Ovary (tissue), 10 donors: ENCODE measurements at regions of chr16 and their contacts with region 1.

Region 1: DNA sequence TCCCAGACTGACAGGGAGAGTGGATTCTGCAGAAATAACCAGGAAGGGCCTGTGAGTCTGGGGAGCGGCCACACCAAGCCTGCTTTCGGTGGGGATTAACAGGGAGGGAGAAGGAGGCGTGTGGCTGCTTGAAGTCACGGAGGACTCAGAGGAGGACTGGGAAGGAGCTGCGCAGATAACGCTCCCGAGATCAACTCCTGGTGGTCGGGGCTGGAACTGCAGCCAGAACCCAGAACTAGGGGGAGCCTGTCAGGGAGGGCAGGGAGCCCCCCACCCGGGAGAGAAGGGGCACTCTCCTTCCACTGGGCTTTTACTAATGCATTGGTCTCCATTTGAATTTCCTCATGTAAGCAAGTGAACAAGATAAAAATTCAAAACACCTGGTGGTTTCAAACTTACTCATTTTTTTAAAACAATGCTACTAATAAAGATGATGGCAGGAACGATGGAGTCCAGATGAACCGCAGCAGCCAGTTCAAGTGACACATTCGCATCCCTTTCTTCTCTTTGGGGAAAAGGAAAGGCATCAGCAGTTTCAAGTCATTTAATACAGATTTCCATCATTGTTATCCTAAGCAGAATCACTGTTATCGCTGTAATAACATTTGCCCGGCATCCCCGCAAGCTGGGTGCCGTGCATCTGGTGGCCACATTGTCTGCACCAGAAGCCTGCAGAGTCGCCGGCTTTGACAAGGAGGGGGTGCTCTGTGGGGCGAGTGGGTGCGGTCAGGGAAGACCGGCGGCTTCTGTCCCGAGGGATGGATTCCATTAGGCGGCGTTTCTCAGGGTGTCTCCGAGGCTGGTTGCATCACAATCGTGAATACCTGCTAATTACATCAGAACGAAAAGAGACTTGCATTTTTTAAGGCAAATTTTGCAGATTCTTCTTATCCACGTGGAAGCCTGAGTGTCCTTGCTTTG is 183.0 kb downstream of the FOXL1 start:
- DNase-seq: no peak
- H3K4me3 ChIP-seq: no peak overlapping the region
- H3K27ac ChIP-seq: no peak overlapping the region
- H3K4me1 ChIP-seq: no peaks in the 10 kb centered on the region
- H3K27me3 ChIP-seq: no peaks in the 10 kb centered on the region
- CTCF ChIP-seq: no peak
- EP300 ChIP-seq: no peak
- POLR2A ChIP-seq: no peak

Region 2: GRCh38 chr16:86570558-86571529 is 190.5 kb before region 1 on chr16:
- intact Hi-C with region 1: loop called in 1 of 4 experiments (anchors 5 kb)
- DNase-seq: no peak
- H3K4me3 ChIP-seq: no peak overlapping the region
- H3K27ac ChIP-seq: no peak overlapping the region
- H3K4me1 ChIP-seq: peaks cover 4% of the 10 kb centered on the region
- H3K27me3 ChIP-seq: peaks cover 2% of the 10 kb centered on the region
- CTCF ChIP-seq: no peak
- EP300 ChIP-seq: no peak
- POLR2A ChIP-seq: no peak

Region 3: DNA sequence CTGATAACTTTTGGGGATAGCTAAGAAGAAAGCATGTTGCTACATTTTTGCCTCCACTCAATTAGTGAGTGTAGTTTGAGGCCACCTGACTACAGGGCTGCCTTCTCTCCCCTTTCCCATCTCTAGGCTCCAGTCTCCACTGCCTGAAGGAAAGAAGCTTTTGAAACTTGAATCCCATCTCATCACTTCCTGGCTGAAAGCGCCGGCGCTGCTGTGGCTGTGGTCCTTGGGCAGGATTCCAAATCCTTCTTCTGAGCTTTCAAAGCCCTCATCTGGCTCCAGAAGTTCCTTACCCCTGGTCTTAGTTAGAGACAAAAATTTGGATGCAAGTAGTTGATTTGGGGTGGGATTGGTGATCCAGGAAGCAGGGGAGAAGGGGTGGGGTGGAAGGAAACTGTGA is 63.7 kb before region 1 on chr16:
- intact Hi-C with region 1: no loop called
- DNase-seq: no peak
- H3K4me3 ChIP-seq: no peak overlapping the region
- H3K27ac ChIP-seq: no peak overlapping the region
- H3K4me1 ChIP-seq: no peaks in the 10 kb centered on the region
- H3K27me3 ChIP-seq: no peaks in the 10 kb centered on the region
- CTCF ChIP-seq: no peak
- EP300 ChIP-seq: no peak
- POLR2A ChIP-seq: no peak

Region 4: GRCh38 chr16:86819533-86819892 is 58.1 kb after region 1 on chr16:
- intact Hi-C with region 1: no loop called
- DNase-seq: no peak
- H3K4me3 ChIP-seq: no peak overlapping the region
- H3K27ac ChIP-seq: no peak overlapping the region
- H3K4me1 ChIP-seq: no peaks in the 10 kb centered on the region
- H3K27me3 ChIP-seq: no peaks in the 10 kb centered on the region
- CTCF ChIP-seq: no peak
- EP300 ChIP-seq: no peak
- POLR2A ChIP-seq: no peak

Region 5: GRCh38 chr16:87806603-87807546 is 1045.5 kb after region 1 on chr16:
- intact Hi-C with region 1: loop called in 1 of 4 experiments (anchors 5 kb)
- DNase-seq: peak in 1 of 5 donors; percentile 45
- H3K4me3 ChIP-seq: peak overlapping the region; percentile 23
- H3K27ac ChIP-seq: no peak overlapping the region
- H3K4me1 ChIP-seq: peaks cover 1% of the 10 kb centered on the region
- H3K27me3 ChIP-seq: no peaks in the 10 kb centered on the region
- CTCF ChIP-seq: no peak
- EP300 ChIP-seq: no peak
- POLR2A ChIP-seq: no peak